B cell (primary cell): ENCODE measurements at regions of chr15 and their contacts with region 1.

Region 1: DNA sequence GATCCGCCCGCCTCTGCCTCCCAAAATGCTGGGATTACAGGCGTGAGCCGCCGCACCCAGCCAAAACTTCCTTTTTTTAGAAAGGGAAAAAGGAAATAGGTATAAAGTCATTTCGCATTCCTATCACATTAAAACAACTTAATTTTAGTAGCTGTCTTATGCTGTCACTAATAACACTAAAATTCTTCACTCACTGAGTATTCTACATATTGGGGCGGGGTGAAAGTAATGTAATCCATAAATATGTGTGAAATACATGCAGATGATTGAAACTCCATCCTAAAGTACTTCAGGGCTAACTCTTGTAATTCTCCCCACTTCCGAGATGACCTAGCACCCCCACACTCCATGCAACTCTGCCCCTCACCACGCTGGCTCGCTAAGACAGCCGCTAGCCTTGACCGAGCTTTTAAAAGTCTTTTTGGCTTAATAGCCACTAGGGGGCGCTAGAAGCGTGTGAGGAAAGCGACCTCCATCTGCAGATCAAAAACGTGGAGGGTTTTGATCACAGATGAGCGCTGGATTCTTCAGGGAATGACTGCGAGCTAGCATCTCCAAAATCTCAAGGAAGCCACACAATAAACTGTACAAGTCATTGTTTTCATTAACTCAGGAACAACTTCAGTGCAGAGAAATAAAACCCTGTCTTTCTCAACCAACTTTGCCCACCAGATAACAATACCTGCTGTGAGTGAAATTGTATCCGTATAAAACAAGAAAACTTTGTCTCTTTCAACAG is 129.3 kb upstream of the IGF1R start:
- DNase-seq: peak; percentile 80
- ATAC-seq: peak; percentile 63
- H3K4me3 ChIP-seq: no peak overlapping the region
- H3K4me3 Mint-ChIP-seq: no peak overlapping the region
- H3K27ac ChIP-seq: no peak overlapping the region
- H3K27ac Mint-ChIP-seq: no peak overlapping the region
- H3K4me1 ChIP-seq: peaks cover 0 to 3% of the 10 kb centered on the region in 2 donors
- H3K4me1 Mint-ChIP-seq: peaks cover 2% of the 10 kb centered on the region
- H3K27me3 ChIP-seq: no peaks in the 10 kb centered on the region
- H3K27me3 Mint-ChIP-seq: peaks cover 10% of the 10 kb centered on the region
- CTCF ChIP-seq: peak; percentile 81

Region 2: DNA sequence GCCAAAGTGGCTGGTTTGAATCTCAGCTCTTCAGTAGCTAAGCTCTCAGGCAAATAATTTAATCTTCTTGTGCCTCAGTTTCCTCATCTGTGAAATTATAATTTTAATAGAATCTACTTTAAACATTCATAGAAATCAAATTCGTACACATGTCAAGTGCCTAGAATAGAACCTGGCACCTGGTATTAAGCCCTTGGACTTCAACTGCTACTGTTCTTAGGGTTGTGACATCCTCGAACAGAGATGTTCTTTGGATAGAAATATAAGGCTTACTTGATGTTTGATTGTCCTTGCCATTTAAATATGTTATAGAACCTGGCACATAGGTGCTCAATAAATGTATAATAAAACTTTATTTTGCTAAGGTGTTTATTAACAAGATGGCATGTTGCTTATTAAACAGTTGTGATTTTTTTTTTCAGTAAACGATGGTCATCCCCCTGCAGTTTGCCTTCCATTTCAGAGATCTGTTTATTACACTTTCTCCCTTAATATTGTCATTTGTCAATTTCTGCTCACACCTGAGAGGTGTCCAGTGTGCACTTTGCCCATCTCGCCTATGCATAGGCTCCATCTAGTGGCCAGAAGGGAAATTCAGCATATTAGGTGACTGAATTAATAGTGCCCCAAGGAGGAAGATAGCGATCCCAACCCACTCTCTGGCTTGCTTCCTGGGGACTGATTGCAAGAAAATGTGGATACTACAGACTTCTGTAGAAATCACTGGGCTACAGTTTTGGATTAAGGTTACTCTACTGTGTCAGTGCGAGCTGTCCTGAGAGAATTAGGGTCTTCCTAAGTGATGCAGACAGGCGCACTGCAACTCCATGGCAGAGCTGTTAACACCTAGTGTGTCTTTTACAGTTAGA is 140.1 kb after region 1 on chr15:
- CTCF ChIA-PET with region 1: interaction called, 107 read pairs
- POLR2A ChIA-PET with region 1: no interaction called
- intact Hi-C with region 1: loop called (anchors 1 kb)
- DNase-seq: peak; percentile 70
- ATAC-seq: peak; percentile 58
- H3K4me3 ChIP-seq: no peak overlapping the region
- H3K4me3 Mint-ChIP-seq: no peak overlapping the region
- H3K27ac ChIP-seq: no peak overlapping the region
- H3K27ac Mint-ChIP-seq: no peak overlapping the region
- H3K4me1 ChIP-seq: no peaks in the 10 kb centered on the region
- H3K4me1 Mint-ChIP-seq: no peaks in the 10 kb centered on the region
- H3K27me3 ChIP-seq: no peaks in the 10 kb centered on the region
- H3K27me3 Mint-ChIP-seq: peaks cover 31% of the 10 kb centered on the region
- CTCF ChIP-seq: peak; percentile 97

Region 3: DNA sequence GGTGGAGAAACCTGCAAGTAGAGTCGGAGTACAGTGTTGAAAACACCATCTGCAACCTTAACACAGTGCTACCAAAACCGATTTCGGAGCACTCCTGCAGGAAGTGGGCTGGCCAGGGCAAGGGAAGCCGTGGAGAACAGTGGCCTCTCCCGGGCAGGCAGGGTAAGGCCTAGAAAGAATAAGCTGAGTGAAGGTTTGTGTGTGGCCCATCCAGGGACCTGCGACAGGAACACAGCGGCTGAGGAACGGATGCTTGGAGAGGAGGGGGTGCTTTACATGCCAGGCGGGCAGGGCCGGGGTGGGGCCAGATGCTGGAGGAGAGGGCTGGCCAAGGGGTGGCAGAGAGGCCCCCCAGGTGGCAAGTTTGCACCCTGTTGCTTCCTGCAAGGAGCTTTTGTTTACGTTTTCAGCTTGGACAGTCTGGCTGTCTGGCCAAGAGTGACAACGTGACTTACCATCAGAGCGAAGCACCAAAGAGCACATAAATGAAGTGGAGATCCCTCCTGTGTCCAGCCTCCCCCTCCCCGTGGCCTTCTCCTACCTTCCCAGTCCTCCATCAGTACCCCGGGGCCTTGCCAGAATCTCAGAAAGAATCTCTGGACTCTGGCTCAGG is 332.1 kb after region 1 on chr15:
- CTCF ChIA-PET with region 1: interaction called, 22 read pairs
- POLR2A ChIA-PET with region 1: no interaction called
- intact Hi-C with region 1: no loop called
- DNase-seq: peak; percentile 68
- ATAC-seq: peak; percentile 35
- H3K4me3 ChIP-seq: no peak overlapping the region
- H3K4me3 Mint-ChIP-seq: peak overlapping the region; percentile 92
- H3K27ac ChIP-seq: peak overlapping the region in 1 of 2 donors; percentile 68
- H3K27ac Mint-ChIP-seq: peak overlapping the region; percentile 94
- H3K4me1 ChIP-seq: peaks cover 14 to 29% of the 10 kb centered on the region in 2 donors
- H3K4me1 Mint-ChIP-seq: peaks cover 37% of the 10 kb centered on the region
- H3K27me3 ChIP-seq: no peaks in the 10 kb centered on the region
- H3K27me3 Mint-ChIP-seq: peaks cover 5% of the 10 kb centered on the region
- CTCF ChIP-seq: peak; percentile 51

Region 4: DNA sequence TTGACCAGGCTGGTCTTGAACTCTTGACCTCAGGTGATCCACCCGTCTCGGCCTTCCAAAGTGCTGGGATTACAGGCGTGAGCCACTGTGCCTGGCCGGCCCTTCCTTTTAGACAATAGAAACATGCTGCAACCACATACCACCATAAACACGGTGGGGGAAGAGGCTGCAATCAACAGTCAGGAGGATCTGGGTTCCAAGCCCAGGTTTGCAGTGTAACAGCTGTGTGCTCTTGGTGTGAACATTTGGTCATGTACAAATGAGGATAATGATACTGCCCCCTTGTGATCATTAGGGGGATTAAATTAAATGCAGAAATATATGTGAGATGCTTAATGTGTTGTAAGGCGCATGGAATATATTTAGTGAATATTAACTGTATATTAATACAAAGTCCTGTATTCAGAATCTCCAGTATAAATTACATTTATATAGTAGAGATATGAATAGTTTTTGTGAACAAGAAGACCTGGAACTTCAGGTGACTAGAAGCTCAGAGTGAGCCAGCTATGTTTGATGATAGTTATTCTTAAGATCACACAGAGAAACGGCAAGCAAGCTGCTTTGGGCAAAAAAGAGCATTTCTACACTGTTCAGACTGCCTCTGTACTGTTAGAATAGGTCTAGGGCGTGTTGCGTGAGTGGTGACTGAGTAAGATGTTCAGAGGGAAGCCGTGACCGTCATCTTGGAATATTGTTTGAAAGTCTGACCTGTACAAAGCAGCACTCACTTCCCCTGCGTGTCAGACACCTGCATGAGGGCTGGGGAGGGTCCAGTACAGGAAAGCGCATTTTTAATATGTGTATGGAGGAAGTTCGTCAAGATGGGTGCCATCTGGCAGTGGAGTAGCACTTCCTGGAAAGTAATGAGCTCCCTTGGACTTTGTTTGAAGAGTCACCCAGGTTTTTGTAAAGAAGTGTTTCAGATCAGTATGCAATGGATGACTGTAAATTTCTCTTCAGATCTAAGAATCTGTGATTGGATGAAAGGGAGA is 362.8 kb after region 1 on chr15:
- CTCF ChIA-PET with region 1: interaction called, 25 read pairs
- POLR2A ChIA-PET with region 1: no interaction called
- intact Hi-C with region 1: no loop called
- DNase-seq: peak; percentile 51
- ATAC-seq: peak; percentile 41
- H3K4me3 ChIP-seq: no peak overlapping the region
- H3K4me3 Mint-ChIP-seq: no peak overlapping the region
- H3K27ac ChIP-seq: no peak overlapping the region
- H3K27ac Mint-ChIP-seq: peak overlapping the region; percentile 0
- H3K4me1 ChIP-seq: peaks cover 4% of the 10 kb centered on the region in 2 donors
- H3K4me1 Mint-ChIP-seq: peaks cover 9% of the 10 kb centered on the region
- H3K27me3 ChIP-seq: no peaks in the 10 kb centered on the region
- H3K27me3 Mint-ChIP-seq: no peaks in the 10 kb centered on the region
- CTCF ChIP-seq: peak; percentile 75

Region 5: GRCh38 chr15:99169769-99170311 is 650.8 kb after region 1 on chr15:
- CTCF ChIA-PET with region 1: no interaction called
- POLR2A ChIA-PET with region 1: no interaction called
- intact Hi-C with region 1: no loop called
- DNase-seq: no peak
- ATAC-seq: no peak
- H3K4me3 ChIP-seq: no peak overlapping the region
- H3K4me3 Mint-ChIP-seq: no peak overlapping the region
- H3K27ac ChIP-seq: no peak overlapping the region
- H3K27ac Mint-ChIP-seq: no peak overlapping the region
- H3K4me1 ChIP-seq: peaks cover 12 to 13% of the 10 kb centered on the region in 2 donors
- H3K4me1 Mint-ChIP-seq: peaks cover 18% of the 10 kb centered on the region
- H3K27me3 ChIP-seq: no peaks in the 10 kb centered on the region
- H3K27me3 Mint-ChIP-seq: no peaks in the 10 kb centered on the region
- CTCF ChIP-seq: no peak